H1 (cell line): ENCODE measurements at regions of chr11 and their contacts with region 1.

Region 1: DNA sequence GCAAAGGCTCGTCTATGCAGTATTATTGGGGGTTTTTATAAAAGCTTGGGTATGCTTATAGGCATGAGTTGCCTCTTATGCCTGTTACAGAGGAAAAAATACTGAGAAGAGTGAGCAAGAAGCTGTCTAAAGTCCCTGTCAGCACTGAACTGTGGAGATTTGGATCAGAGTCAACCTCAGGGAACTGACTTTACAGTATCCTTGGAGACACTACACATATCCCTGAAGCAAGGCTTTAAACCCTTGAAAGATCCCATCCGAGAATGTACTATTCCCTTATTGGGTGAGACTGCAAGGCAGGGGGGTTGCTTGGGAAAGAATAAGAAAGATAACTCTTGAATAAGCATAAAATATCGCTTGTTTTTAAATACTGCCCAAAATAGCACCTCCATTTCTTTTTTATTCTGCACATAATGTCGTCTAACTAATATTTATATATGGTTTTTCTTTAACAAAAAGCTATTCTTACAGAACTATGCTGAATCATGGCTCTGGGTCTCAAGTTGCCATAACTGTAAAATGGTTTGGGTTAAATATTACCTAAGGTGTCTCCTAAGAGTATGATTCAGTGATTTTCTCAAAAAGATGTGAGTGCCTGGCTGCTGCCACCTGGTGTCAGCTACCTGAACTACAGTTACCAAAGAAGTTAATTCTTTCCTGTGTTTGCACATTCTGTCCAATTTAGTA is 1062.8 kb downstream of the DLG2 start:
- DNase-seq: no peak
- H3K4me3 ChIP-seq: no peak overlapping the region
- H3K27ac ChIP-seq: no peak overlapping the region
- H3K4me1 ChIP-seq: no peaks in the 10 kb centered on the region
- H3K27me3 ChIP-seq: no peaks in the 10 kb centered on the region
- CTCF ChIP-seq: peak in 2 of 3 experiments; percentile 62 to 73; a peak in 3 of 4 replicates
- EP300 ChIP-seq: no peak
- POLR2A ChIP-seq: peak in 1 of 2 experiments; percentile 51; a peak in 1 of 3 replicates
- RAD21 ChIP-seq: peak; percentile 58 to 68

Region 2: DNA sequence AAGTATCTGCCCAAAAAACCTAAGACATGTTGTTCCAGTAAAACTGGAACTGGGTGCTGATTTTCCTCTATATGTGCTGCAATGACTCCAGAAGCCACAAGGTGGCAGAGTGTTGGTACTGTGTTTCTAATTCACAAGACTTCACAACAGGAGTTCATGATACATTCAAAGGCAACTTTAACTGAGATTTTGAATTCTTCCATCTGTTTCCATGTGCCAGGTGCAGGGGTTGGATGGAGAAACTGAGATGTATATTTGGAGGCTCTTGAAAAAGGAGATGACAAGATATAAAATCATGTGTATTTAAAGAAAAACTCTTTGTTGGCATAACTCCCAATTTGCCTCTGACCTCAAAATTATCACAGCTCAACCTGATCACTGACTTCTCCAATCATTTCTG is 179.6 kb before region 1 on chr11:
- CTCF ChIA-PET with region 1: interaction called, 14 read pairs
- POLR2A ChIA-PET with region 1: no interaction called
- DNase-seq: peak in 1 of 2 experiments; percentile 66
- H3K4me3 ChIP-seq: no peak overlapping the region
- H3K27ac ChIP-seq: no peak overlapping the region
- H3K4me1 ChIP-seq: no peaks in the 10 kb centered on the region
- H3K27me3 ChIP-seq: no peaks in the 10 kb centered on the region
- CTCF ChIP-seq: peak in 2 of 3 experiments; percentile 73 to 80; a peak in 3 of 4 replicates
- EP300 ChIP-seq: no peak
- POLR2A ChIP-seq: no peak
- RAD21 ChIP-seq: peak; percentile 69 to 77

Region 3: GRCh38 chr11:84398017-84398626 is 166.2 kb before region 1 on chr11:
- CTCF ChIA-PET with region 1: interaction called, 21 read pairs
- POLR2A ChIA-PET with region 1: no interaction called
- DNase-seq: no peak
- H3K4me3 ChIP-seq: no peak overlapping the region
- H3K27ac ChIP-seq: no peak overlapping the region
- H3K4me1 ChIP-seq: no peaks in the 10 kb centered on the region
- H3K27me3 ChIP-seq: peaks cover 0 to 3% (median 0%) of the 10 kb centered on the region in 4 experiments; a peak in 1 of 7 replicates
- CTCF ChIP-seq: peak in 2 of 3 experiments; percentile 57 to 61; a peak in 3 of 4 replicates
- EP300 ChIP-seq: no peak
- POLR2A ChIP-seq: no peak
- RAD21 ChIP-seq: peak; percentile 76 to 80

Region 4: DNA sequence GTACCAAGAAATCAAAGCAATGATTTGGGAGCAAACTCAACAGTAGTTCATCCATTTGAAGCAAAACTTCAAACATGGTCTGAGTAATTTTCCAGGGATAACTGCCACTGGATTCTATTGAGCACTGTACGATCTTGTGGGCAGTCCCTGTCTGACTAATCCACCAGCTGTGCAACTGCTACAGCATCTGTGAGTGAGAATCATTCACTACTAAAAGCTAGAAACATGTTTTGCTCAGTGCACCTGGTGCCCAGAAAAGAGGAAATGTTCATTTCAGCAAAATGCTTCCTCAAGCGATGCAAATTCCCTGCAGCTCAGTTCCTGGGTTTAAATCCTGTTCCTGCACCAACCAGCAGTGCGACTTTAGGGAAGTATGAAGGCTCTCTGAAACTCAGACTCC is 15.1 kb before region 1 on chr11:
- CTCF ChIA-PET with region 1: interaction called, 43 read pairs
- POLR2A ChIA-PET with region 1: interaction called, 3 read pairs
- DNase-seq: no peak
- H3K4me3 ChIP-seq: no peak overlapping the region
- H3K27ac ChIP-seq: no peak overlapping the region
- H3K4me1 ChIP-seq: peaks cover 0 to 3% (median 1%) of the 10 kb centered on the region in 4 experiments; a peak in 3 of 7 replicates
- H3K27me3 ChIP-seq: no peaks in the 10 kb centered on the region
- CTCF ChIP-seq: no peak
- EP300 ChIP-seq: no peak
- POLR2A ChIP-seq: no peak
- RAD21 ChIP-seq: no peak

Region 5: DNA sequence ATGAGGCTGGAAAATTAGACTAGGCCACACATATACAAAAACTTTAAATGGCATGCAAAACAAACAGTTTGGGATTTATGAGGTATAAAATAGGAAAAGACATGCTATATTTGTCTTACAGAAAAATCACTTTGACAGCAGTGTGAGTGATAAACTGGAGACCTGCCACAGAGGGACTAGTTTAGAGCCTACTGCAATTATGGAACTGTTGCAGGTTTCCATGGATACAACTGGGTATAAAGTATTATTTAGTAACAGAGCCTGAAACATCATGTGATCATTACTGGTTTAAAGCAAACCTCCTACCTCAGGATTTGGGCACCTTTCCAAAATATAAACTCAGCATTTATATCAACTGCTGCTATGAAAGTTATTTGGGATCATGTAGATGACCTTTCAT is 30.3 kb after region 1 on chr11:
- CTCF ChIA-PET with region 1: interaction called, 10 read pairs
- POLR2A ChIA-PET with region 1: no interaction called
- DNase-seq: no peak
- H3K4me3 ChIP-seq: no peak overlapping the region
- H3K27ac ChIP-seq: no peak overlapping the region
- H3K4me1 ChIP-seq: no peaks in the 10 kb centered on the region
- H3K27me3 ChIP-seq: no peaks in the 10 kb centered on the region
- CTCF ChIP-seq: no peak
- EP300 ChIP-seq: no peak
- POLR2A ChIP-seq: no peak
- RAD21 ChIP-seq: no peak

Region 6: DNA sequence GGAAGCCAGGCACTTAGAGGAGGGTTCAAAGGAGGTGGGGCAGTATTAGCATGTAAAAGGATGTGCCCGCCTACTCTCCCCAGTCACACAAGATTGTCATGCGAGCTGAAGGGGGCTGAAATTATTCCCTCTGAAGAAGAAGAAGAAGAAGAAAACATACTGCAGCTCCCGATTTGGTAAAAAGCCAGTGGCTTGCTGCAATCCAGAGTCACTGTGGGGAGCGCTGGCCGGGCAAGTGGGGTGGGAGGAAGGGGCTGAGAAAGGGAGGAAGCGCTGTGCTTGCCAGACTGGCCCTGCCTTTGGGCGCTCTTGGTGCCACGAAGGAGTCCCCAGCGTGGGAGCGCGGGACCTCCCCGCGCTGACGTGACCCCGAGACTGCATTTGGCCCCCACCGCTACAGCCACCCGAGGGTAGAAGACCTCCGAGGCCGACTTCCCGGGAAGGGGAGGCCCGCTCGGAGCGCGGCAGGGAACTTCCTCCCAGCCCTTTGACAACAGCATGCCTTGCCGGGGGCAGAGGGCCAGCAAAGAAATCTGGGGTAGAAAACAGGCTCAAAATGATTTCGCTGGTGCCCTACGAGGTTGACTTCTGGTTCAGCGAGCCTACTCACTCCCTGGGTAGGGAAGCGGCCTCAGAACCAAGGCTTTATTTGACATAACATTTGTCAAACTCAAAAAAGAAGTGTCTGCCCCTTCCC is 156.5 kb after region 1 on chr11:
- CTCF ChIA-PET with region 1: interaction called, 19 read pairs
- POLR2A ChIA-PET with region 1: interaction called, 3 read pairs
- DNase-seq: peak in 1 of 2 experiments; percentile 77
- H3K4me3 ChIP-seq: peak overlapping the region; percentile 54 to 77 (median 68)
- H3K27ac ChIP-seq: no peak overlapping the region
- H3K4me1 ChIP-seq: peaks cover 3 to 6% (median 5%) of the 10 kb centered on the region in 4 experiments; a peak in 5 of 7 replicates
- H3K27me3 ChIP-seq: peaks cover 0 to 11% (median 2%) of the 10 kb centered on the region in 4 experiments; a peak in 4 of 7 replicates
- CTCF ChIP-seq: no peak
- EP300 ChIP-seq: no peak
- POLR2A ChIP-seq: no peak
- RAD21 ChIP-seq: no peak